ENCODE measurements at regions of chr13 and their contacts with region 1.

Region 1: GRCh38 chr13:39602614-39603366 is at the start of gene LHFPL6:
- DNase-seq: peak; percentile 84
- H3K4me3 ChIP-seq: peak within 1 kb of the TSS; percentile 90 to 92 (median 92)
- H3K27ac ChIP-seq: peak within 1 kb of the TSS; percentile 62
- H3K4me1 ChIP-seq: peaks cover 23% of the 10 kb centered on the region
- H3K27me3 ChIP-seq: no peaks in the 10 kb centered on the region
- CTCF ChIP-seq: peak; percentile 35 to 58
- total RNA-seq, gene LHFPL6: 29.2 to 33.1 TPM

Region 2: GRCh38 chr13:39144941-39145533 is 457.8 kb before region 1 on chr13:
- CTCF ChIA-PET with region 1: no interaction called
- dilution Hi-C with region 1: no loop called
- in situ Hi-C with region 1: loop called (anchors 10 kb)
- intact Hi-C with region 1: loop called (anchors 2 kb)
- DNase-seq: peak; percentile 54
- H3K4me3 ChIP-seq: no peak overlapping the region
- H3K27ac ChIP-seq: no peak overlapping the region
- H3K4me1 ChIP-seq: peaks cover 8% of the 10 kb centered on the region
- H3K27me3 ChIP-seq: peaks cover 27% of the 10 kb centered on the region
- CTCF ChIP-seq: peak; percentile 72 to 90

Region 3: DNA sequence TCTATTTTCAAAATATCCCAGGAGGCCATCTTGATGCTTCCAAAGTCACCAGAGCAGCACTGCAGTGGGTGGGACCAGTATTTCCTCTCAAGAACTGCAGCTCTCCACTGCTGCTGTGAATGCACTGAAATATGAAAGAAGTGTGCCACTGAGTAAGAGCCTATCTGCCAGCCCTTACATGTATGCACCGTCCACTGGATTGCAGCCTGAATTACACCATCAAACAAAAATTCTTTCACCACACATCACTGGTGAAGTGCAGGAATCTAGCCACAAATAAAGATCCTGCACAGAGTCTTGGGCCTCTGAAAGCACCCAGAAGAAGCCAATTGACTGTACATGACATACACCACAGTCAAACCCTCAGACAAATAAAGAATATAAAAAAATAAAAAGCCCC is 248.8 kb before region 1 on chr13:
- CTCF ChIA-PET with region 1: no interaction called
- dilution Hi-C with region 1: no loop called
- in situ Hi-C with region 1: no loop called
- intact Hi-C with region 1: loop called (anchors 1 kb)
- DNase-seq: peak; percentile 77
- H3K4me3 ChIP-seq: no peak overlapping the region
- H3K27ac ChIP-seq: no peak overlapping the region
- H3K4me1 ChIP-seq: peaks cover 5% of the 10 kb centered on the region
- H3K27me3 ChIP-seq: no peaks in the 10 kb centered on the region
- CTCF ChIP-seq: peak in 1 of 2 donors; percentile 1

Region 4: GRCh38 chr13:39415008-39415802 is 187.6 kb before region 1 on chr13:
- CTCF ChIA-PET with region 1: no interaction called
- dilution Hi-C with region 1: no loop called
- in situ Hi-C with region 1: loop called in 1 of 2 experiments (anchors 25 kb)
- intact Hi-C with region 1: loop called (anchors 1 kb)
- DNase-seq: peak; percentile 22
- H3K4me3 ChIP-seq: no peak overlapping the region
- H3K27ac ChIP-seq: no peak overlapping the region
- H3K4me1 ChIP-seq: peaks cover 7% of the 10 kb centered on the region
- H3K27me3 ChIP-seq: no peaks in the 10 kb centered on the region
- CTCF ChIP-seq: peak; percentile 53 to 73

Region 5: GRCh38 chr13:39527961-39528660 is 74.7 kb before region 1 on chr13:
- CTCF ChIA-PET with region 1: interaction called, 8 read pairs
- dilution Hi-C with region 1: no loop called
- in situ Hi-C with region 1: no loop called
- intact Hi-C with region 1: loop called (anchors 5 kb)
- DNase-seq: peak; percentile 79
- H3K4me3 ChIP-seq: no peak overlapping the region
- H3K27ac ChIP-seq: peak overlapping the region; percentile 50
- H3K4me1 ChIP-seq: peaks cover 35% of the 10 kb centered on the region
- H3K27me3 ChIP-seq: no peaks in the 10 kb centered on the region
- CTCF ChIP-seq: no peak